ENCODE measurements at regions of chr4 and their contacts with region 1.

Region 1: GRCh38 chr4:55853484-55854046 is at the start of gene EXOC1:
- DNase-seq: peak; percentile 97
- ATAC-seq: peak; percentile 99
- H3K4me3 Mint-ChIP-seq: no peak within 1 kb of the TSS
- H3K27ac Mint-ChIP-seq: peak within 1 kb of the TSS; percentile 85
- H3K4me1 Mint-ChIP-seq: peaks cover 15% of the 10 kb centered on the region
- H3K27me3 Mint-ChIP-seq: peaks cover 8% of the 10 kb centered on the region
- CTCF ChIP-seq: no peak
- total RNA-seq, gene EXOC1: 28.7 and 34.8 TPM in 2 replicates

Region 2: GRCh38 chr4:54064295-54065111 is 1789.1 kb before region 1 on chr4 and contains the start of gene CHIC2:
- CTCF ChIA-PET with region 1: no interaction called
- POLR2A ChIA-PET with region 1: no interaction called
- intact Hi-C with region 1: loop called (anchors 5 kb)
- DNase-seq: peak; percentile 95
- ATAC-seq: peak; percentile 90
- H3K4me3 Mint-ChIP-seq: peak within 1 kb of the TSS; percentile 92
- H3K27ac Mint-ChIP-seq: peak within 1 kb of the TSS; percentile 87
- H3K4me1 Mint-ChIP-seq: peaks cover 47% of the 10 kb centered on the region
- H3K27me3 Mint-ChIP-seq: peaks cover 3% of the 10 kb centered on the region
- CTCF ChIP-seq: no peak
- total RNA-seq, gene CHIC2: 17.5 and 21.6 TPM in 2 replicates

Region 3: GRCh38 chr4:55395529-55396307 is 457.8 kb before region 1 on chr4 and contains the start of gene TMEM165:
- CTCF ChIA-PET with region 1: no interaction called
- POLR2A ChIA-PET with region 1: interaction called, 8 read pairs
- intact Hi-C with region 1: loop called (anchors 1 kb)
- DNase-seq: peak; percentile 89
- ATAC-seq: peak; percentile 92
- H3K4me3 Mint-ChIP-seq: peak within 1 kb of the TSS; percentile 91
- H3K27ac Mint-ChIP-seq: peak within 1 kb of the TSS; percentile 95
- H3K4me1 Mint-ChIP-seq: peaks cover 42% of the 10 kb centered on the region
- H3K27me3 Mint-ChIP-seq: no peaks in the 10 kb centered on the region
- CTCF ChIP-seq: no peak
- total RNA-seq, gene TMEM165: 80.3 and 90.2 TPM in 2 replicates

Region 4: DNA sequence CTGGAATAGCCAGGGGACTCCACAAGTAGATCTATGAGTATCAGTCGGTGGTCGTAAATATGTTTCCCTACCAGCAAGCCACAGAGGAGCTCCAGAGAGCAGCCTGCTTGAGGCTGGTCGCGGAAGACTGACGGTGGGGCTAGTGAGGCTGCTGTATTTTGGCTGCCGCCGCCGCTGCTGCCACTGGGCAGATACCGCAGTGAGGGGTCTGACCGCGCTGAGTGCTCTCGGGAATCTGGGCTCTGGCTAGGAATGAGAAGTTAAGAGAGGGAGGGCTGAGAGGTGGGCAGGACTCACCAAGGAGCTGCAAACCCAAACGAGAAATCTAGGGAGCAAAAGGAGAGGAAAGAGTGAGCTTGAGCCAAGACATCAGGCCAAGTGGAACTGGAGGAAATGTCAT is 33.9 kb before region 1 on chr4 and contains the start of gene EXOC1L:
- CTCF ChIA-PET with region 1: no interaction called
- POLR2A ChIA-PET with region 1: no interaction called
- intact Hi-C with region 1: no loop called
- DNase-seq: no peak
- ATAC-seq: no peak
- H3K4me3 Mint-ChIP-seq: no peak within 1 kb of the TSS
- H3K27ac Mint-ChIP-seq: no peak within 1 kb of the TSS
- H3K4me1 Mint-ChIP-seq: peaks cover 3% of the 10 kb centered on the region
- H3K27me3 Mint-ChIP-seq: peaks cover 15% of the 10 kb centered on the region
- CTCF ChIP-seq: no peak
- total RNA-seq, gene EXOC1L: not detected in 2 replicates

Region 5: GRCh38 chr4:56387023-56388001 is 533.7 kb after region 1 on chr4 and contains the start of gene AASDH:
- CTCF ChIA-PET with region 1: no interaction called
- POLR2A ChIA-PET with region 1: no interaction called
- intact Hi-C with region 1: loop called (anchors 1 kb)
- DNase-seq: peak; percentile 96
- ATAC-seq: peak; percentile 90
- H3K4me3 Mint-ChIP-seq: peak within 1 kb of the TSS; percentile 93
- H3K27ac Mint-ChIP-seq: peak within 1 kb of the TSS; percentile 99
- H3K4me1 Mint-ChIP-seq: peaks cover 27% of the 10 kb centered on the region
- H3K27me3 Mint-ChIP-seq: no peaks in the 10 kb centered on the region
- CTCF ChIP-seq: no peak
- total RNA-seq, gene AASDH: 12.8 and 14.2 TPM in 2 replicates

Region 6: DNA sequence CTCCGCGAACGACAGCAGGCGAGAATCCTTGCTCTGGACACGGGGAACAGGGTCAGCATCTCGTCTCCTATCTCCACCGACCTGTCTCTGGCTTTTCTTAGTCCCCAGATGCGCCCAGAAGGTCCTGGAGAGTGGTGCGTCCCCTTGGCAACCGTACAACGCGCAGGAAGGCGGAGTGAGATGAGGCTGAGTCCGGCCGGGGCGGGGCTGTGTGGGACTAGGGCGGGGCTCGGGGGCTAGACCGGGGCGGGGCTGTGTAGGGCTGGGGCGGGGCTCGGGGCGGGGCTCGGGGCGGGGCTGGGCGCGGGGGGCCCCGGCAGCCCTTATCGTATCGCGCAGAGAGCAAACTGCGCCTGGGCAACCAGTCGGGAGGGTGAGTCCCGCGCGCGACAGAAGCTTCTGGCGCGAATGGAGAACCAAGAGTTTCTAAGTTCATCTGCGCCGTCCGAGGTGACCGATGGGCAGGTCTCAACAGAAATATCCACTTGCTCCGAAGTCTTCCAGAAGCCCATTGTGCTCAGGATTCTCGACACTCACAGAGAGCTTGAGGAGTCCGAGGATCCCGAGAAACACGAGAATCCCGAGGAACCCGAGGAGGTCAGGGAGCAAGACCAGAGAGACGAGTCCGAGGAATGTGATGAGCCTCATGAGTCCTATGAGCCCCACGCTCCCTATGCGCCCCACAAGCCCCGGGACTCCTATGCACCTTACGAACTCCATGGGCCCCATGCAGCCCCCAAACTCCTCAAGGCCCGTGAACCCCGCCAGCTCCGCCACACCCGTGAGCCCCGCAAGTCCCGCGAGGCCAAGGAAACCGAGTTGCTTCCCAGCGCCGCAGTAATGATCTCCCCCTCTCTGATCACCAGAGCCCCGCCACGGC is 676.9 kb after region 1 on chr4:
- CTCF ChIA-PET with region 1: no interaction called
- POLR2A ChIA-PET with region 1: no interaction called
- intact Hi-C with region 1: loop called (anchors 2 kb)
- DNase-seq: peak; percentile 72
- ATAC-seq: peak; percentile 99
- H3K4me3 Mint-ChIP-seq: peak overlapping the region; percentile 68
- H3K27ac Mint-ChIP-seq: no peak overlapping the region
- H3K4me1 Mint-ChIP-seq: peaks cover 4% of the 10 kb centered on the region
- H3K27me3 Mint-ChIP-seq: peaks cover 12% of the 10 kb centered on the region
- CTCF ChIP-seq: no peak

Region 7: GRCh38 chr4:56977321-56978012 is 1123.9 kb after region 1 on chr4 and contains the start of gene NOA1:
- CTCF ChIA-PET with region 1: no interaction called
- POLR2A ChIA-PET with region 1: interaction called, 4 read pairs
- intact Hi-C with region 1: loop called (anchors 5 kb)
- DNase-seq: peak; percentile 98
- ATAC-seq: peak; percentile 86
- H3K4me3 Mint-ChIP-seq: peak within 1 kb of the TSS; percentile 99
- H3K27ac Mint-ChIP-seq: peak within 1 kb of the TSS; percentile 96
- H3K4me1 Mint-ChIP-seq: peaks cover 70% of the 10 kb centered on the region
- H3K27me3 Mint-ChIP-seq: no peaks in the 10 kb centered on the region
- CTCF ChIP-seq: no peak
- total RNA-seq, gene NOA1: 24.1 and 25.0 TPM in 2 replicates